ENCODE measurements at regions of chr5 and their contacts with region 1.

Region 1: DNA sequence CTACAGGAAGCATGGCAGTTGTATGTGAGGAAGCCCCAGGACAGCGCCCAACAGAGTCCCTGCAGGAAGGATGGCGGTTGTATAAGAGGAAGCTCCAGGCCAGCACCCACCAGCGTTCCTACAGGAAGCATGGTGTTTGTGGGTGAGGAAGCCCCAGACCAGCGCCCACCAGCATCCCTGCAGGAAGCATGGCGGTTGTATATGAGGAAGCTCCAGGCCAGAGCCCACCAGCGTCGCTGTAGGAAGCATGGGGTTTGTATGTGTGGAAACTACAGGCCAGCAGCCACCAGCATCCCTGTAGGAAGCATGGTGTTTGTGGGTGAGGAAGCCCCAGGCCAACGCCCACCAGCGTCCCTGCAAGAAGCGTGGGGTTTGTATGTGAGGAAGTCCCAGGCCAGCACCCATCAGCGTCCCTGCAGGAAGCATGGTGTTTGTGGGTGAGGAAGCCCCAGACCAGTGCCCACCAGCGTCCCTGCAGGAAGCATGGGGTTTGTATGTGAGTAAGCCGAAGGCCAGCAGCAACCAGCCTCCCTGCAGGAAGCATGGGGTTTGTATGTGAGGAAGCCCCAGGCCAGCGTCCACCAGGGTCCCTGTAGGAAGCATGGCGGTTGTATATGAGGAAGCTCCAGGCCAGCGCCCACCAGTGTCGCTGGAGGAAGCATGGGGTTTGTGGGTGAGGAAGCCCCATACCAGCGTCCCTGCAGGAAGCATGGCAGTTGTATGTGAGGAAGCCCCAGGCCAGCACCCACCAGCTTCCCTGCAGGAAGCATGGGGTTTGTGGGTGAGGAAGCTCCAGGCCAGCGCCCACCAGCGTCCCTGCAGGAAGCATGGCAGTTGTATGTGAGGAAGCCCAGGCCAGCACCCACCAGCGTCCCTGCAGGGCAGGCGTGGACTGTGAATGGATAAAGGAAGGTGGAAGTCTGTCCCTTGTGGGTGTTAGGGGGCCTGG is 79.0 kb downstream of the DAP start:
- DNase-seq: no peak
- H3K4me3 ChIP-seq: no peak overlapping the region
- H3K27ac ChIP-seq: no peak overlapping the region
- H3K4me1 ChIP-seq: no peaks in the 10 kb centered on the region
- H3K27me3 ChIP-seq: no peaks in the 10 kb centered on the region
- CTCF ChIP-seq: no peak
- EP300 ChIP-seq: no peak
- POLR2A ChIP-seq: no peak

Region 2: DNA sequence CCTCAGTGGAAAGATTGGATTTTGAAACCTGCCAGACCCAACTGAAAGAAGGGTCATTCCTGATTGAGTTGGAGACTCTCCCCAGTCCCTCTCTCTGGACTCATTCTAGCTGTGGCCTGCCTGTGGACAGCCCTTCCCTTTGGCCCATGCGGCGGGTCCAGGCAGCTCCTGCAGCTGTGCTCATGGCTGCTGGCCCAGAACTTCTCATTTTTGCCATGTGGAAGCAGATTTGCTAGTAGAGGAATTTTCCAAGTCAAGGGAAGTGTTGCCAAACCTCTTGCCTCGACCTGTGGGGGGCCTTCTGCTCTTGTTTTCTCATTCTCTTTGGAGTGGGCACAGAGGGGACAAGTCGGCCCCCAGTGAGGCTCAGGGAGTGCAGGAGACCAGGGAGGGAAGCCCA is 29.0 kb before region 1 on chr5:
- in situ Hi-C with region 1: no loop called
- intact Hi-C with region 1: loop called (anchors 1 kb)
- DNase-seq: no peak
- H3K4me3 ChIP-seq: no peak overlapping the region
- H3K27ac ChIP-seq: no peak overlapping the region
- H3K4me1 ChIP-seq: no peaks in the 10 kb centered on the region
- H3K27me3 ChIP-seq: peaks cover 15% of the 10 kb centered on the region
- CTCF ChIP-seq: no peak
- EP300 ChIP-seq: no peak
- POLR2A ChIP-seq: no peak

Measured in transverse colon (tissue), 4 donors.